ENCODE measurements at regions of chr1 and their contacts with region 1.

Region 1: DNA sequence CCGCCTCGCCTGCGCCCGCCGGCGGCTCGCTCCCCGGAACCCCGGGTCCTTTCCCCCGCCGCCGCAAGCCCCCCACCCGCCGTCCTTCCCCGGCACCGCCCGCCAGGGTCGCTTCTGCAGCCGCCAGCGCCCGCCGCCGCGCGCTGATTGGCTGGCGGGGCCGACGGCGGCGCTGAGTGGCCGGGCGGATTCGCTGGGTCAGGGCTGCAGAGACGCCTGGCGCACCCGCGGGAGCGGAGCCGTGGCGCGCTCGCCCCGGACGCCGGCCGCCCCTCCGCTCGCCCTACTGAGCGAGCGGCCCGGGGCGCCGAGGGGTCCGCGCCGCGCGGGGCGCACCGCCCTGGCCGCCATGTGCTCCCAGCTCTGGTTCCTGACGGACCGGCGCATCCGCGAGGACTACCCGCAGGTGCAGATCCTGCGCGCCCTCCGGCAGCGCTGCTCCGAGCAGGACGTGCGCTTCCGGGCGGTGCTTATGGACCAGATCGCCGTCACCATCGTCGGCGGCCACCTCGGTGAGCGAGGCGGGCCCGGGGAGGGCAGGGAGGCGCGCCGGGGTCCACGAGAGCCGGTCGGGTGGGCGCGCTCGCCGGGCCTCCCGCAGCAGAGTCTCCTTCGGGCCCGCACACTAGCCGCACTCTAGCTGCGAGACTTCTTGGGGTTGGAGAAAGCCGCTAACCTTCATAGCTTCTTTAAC is at the start of gene RIMKLA:
- DNase-seq: peak; percentile 86
- H3K4me3 Mint-ChIP-seq: peak within 1 kb of the TSS; percentile 81
- H3K27ac Mint-ChIP-seq: peak within 1 kb of the TSS; percentile 48
- H3K4me1 Mint-ChIP-seq: peaks cover 8% of the 10 kb centered on the region
- H3K27me3 Mint-ChIP-seq: peaks cover 39% of the 10 kb centered on the region
- total RNA-seq, gene RIMKLA: 5.0 and 5.5 TPM in 2 replicates

Region 2: GRCh38 chr1:42056460-42056859 is 324.3 kb before region 1 on chr1:
- intact Hi-C with region 1: no loop called
- DNase-seq: no peak
- H3K4me3 Mint-ChIP-seq: no peak overlapping the region
- H3K27ac Mint-ChIP-seq: no peak overlapping the region
- H3K4me1 Mint-ChIP-seq: no peaks in the 10 kb centered on the region
- H3K27me3 Mint-ChIP-seq: peaks cover 27% of the 10 kb centered on the region

Region 3: DNA sequence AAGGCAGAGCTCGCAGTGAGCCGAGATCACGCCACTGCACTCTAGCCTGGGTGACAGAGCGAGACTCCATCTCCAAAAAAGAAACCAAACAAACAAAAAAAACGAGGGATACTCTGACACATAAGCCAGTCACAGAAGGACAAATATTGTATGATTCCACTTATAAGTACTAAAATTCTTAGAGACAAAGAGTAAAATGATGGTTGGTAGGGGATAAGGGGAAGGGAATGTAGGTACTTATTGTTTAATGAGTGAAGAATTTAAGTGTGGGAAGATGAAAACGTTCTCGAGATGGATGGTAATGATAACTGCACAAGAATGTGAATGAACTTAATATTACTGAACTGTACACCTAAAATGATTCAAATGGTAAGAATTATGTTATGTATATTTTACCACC is 149.5 kb before region 1 on chr1:
- intact Hi-C with region 1: no loop called
- DNase-seq: no peak
- H3K4me3 Mint-ChIP-seq: no peak overlapping the region
- H3K27ac Mint-ChIP-seq: no peak overlapping the region
- H3K4me1 Mint-ChIP-seq: no peaks in the 10 kb centered on the region
- H3K27me3 Mint-ChIP-seq: no peaks in the 10 kb centered on the region

Region 4: GRCh38 chr1:42462828-42463763 is 82.4 kb after region 1 on chr1 and contains the start of gene CCDC30:
- intact Hi-C with region 1: loop called (anchors 5 kb)
- DNase-seq: peak; percentile 99
- H3K4me3 Mint-ChIP-seq: peak within 1 kb of the TSS; percentile 85
- H3K27ac Mint-ChIP-seq: peak within 1 kb of the TSS; percentile 78
- H3K4me1 Mint-ChIP-seq: peaks cover 19% of the 10 kb centered on the region
- H3K27me3 Mint-ChIP-seq: peaks cover 10% of the 10 kb centered on the region
- total RNA-seq, gene CCDC30: 0.68 and 1.1 TPM in 2 replicates

Region 5: DNA sequence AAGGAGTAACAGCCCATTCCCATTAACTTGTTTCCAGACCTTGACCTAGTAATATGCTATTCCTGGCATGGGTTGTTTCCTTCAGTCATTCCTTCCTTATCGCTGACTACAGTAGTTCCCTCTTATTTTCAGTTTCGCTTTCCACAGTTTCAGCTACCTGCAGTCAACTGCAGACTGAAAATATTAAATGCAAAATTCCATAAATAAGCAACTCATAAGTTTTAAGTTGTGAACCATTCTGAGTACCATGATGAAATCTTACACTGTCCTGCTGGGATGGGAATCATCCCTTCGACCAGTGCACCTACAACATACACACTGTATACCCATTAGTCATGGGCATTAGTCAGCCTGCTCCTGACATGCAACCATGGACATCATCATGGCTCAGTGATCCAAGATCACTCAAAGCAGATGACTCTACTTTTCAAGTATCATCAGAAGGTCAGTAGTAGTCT is 149.0 kb after region 1 on chr1:
- intact Hi-C with region 1: no loop called
- DNase-seq: peak; percentile 61
- H3K4me3 Mint-ChIP-seq: peak overlapping the region; percentile 70
- H3K27ac Mint-ChIP-seq: peak overlapping the region; percentile 12
- H3K4me1 Mint-ChIP-seq: peaks cover 16% of the 10 kb centered on the region
- H3K27me3 Mint-ChIP-seq: peaks cover 2% of the 10 kb centered on the region